IMR-90 (cell line): ENCODE measurements at regions of chr5 and their contacts with region 1.

Region 1: DNA sequence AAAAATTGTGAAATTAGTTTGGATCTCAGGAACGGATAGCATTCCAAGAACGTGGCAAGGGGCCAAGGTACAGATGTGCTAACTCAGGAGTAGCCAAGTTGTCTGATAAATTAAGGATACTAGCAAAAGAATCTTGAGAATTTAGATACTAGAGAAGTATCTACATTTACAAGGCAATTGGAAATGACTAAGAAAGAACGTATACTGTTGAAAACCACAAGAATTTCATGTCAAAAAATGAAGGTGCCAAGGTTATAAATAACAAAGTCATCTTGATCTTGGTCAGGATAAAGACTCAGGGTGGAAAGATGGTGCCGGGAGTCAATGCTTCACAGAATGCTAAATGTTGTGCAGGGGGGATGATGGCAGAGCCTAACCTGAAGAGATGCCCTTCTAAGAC is 19.2 kb downstream of the CAPSL start:
- DNase-seq: peak; percentile 95
- ATAC-seq: peak; percentile 78
- H3K4me3 ChIP-seq: no peak overlapping the region
- H3K27ac ChIP-seq: peak overlapping the region; percentile 53
- H3K4me1 ChIP-seq: peaks cover 6% of the 10 kb centered on the region
- H3K27me3 ChIP-seq: no peaks in the 10 kb centered on the region
- CTCF ChIP-seq: no peak
- POLR2A ChIP-seq: no peak
- RAD21 ChIP-seq: no peak

Region 2: DNA sequence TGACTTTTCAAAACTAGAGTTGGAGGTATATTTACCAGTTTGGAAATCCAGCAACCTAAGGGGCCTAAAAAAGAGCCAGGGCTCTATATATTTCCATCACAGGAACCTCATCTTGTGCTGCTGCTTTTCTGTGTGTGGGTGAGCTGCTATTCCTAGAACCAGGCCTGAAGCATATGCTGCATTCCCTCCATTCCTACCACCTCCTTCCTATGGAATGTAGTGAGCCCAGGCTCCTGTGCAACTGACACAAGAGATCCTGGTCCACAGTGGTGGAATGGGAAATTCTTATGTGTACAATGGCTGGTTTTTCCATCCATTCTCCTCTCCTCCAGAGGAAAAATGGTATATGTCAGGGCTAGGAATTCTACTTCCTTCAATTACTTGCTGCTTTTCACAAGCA is 262.5 kb before region 1 on chr5:
- CTCF ChIA-PET with region 1: interaction called, 27 read pairs
- POLR2A ChIA-PET with region 1: no interaction called
- dilution Hi-C with region 1: no loop called
- in situ Hi-C with region 1: loop called (anchors 5 kb)
- intact Hi-C with region 1: loop called (anchors 2 kb)
- DNase-seq: peak; percentile 75
- ATAC-seq: peak; percentile 98
- H3K4me3 ChIP-seq: no peak overlapping the region
- H3K27ac ChIP-seq: no peak overlapping the region
- H3K4me1 ChIP-seq: peaks cover 2% of the 10 kb centered on the region; the same call in 1 of the 2 replicates
- H3K27me3 ChIP-seq: no peaks in the 10 kb centered on the region
- CTCF ChIP-seq: no peak
- POLR2A ChIP-seq: no peak
- RAD21 ChIP-seq: no peak

Region 3: GRCh38 chr5:35777358-35778087 is 141.7 kb before region 1 on chr5:
- CTCF ChIA-PET with region 1: interaction called, 8 read pairs
- POLR2A ChIA-PET with region 1: no interaction called
- dilution Hi-C with region 1: no loop called
- in situ Hi-C with region 1: loop called (anchors 5 kb)
- intact Hi-C with region 1: loop called (anchors 2 kb)
- DNase-seq: peak; percentile 83
- ATAC-seq: peak; percentile 35
- H3K4me3 ChIP-seq: no peak overlapping the region
- H3K27ac ChIP-seq: peak overlapping the region; percentile 10; the same call in 1 of the 2 replicates
- H3K4me1 ChIP-seq: peaks cover 14% of the 10 kb centered on the region
- H3K27me3 ChIP-seq: no peaks in the 10 kb centered on the region
- CTCF ChIP-seq: peak; percentile 54
- POLR2A ChIP-seq: no peak
- RAD21 ChIP-seq: peak; percentile 54; the same call in 1 of the 2 replicates

Region 4: GRCh38 chr5:35884115-35884788 is 34.9 kb before region 1 on chr5:
- CTCF ChIA-PET with region 1: no interaction called
- POLR2A ChIA-PET with region 1: no interaction called
- dilution Hi-C with region 1: no loop called
- in situ Hi-C with region 1: no loop called
- intact Hi-C with region 1: loop called (anchors 2 kb)
- DNase-seq: peak; percentile 90
- ATAC-seq: peak; percentile 93
- H3K4me3 ChIP-seq: no peak overlapping the region
- H3K27ac ChIP-seq: peak overlapping the region; percentile 59
- H3K4me1 ChIP-seq: peaks cover 6% of the 10 kb centered on the region; the same call in 1 of the 2 replicates
- H3K27me3 ChIP-seq: no peaks in the 10 kb centered on the region
- CTCF ChIP-seq: no peak
- POLR2A ChIP-seq: no peak
- RAD21 ChIP-seq: no peak